CD4-positive, alpha-beta memory T cell (primary cell): ENCODE measurements at regions of chr22 and their contacts with region 1.

Region 1: GRCh38 chr22:25048659-25049647 is 96.4 kb downstream of the KIAA1671 start:
- DNase-seq: peak; percentile 49 to 68 (median 65)
- H3K4me3 ChIP-seq: no peak overlapping the region
- H3K4me3 Mint-ChIP-seq: no peak overlapping the region
- H3K27ac ChIP-seq: no peak overlapping the region
- H3K27ac Mint-ChIP-seq: peak overlapping the region in 1 of 7 donors; percentile 52
- H3K4me1 ChIP-seq: no peaks in the 10 kb centered on the region
- H3K4me1 Mint-ChIP-seq: no peaks in the 10 kb centered on the region
- H3K27me3 ChIP-seq: no peaks in the 10 kb centered on the region
- H3K27me3 Mint-ChIP-seq: peaks cover 2 to 3% of the 10 kb centered on the region in 2 donors

Region 2: GRCh38 chr22:24938741-24939341 is 110.1 kb before region 1 on chr22:
- CTCF ChIA-PET with region 1: interaction called, 63 read pairs
- POLR2A ChIA-PET with region 1: no interaction called
- intact Hi-C with region 1: loop called (anchors 1 kb)
- DNase-seq: peak in 4 of 5 donors; percentile 38 to 47 (median 42)
- H3K4me3 ChIP-seq: no peak overlapping the region
- H3K4me3 Mint-ChIP-seq: no peak overlapping the region
- H3K27ac ChIP-seq: no peak overlapping the region
- H3K27ac Mint-ChIP-seq: no peak overlapping the region
- H3K4me1 ChIP-seq: no peaks in the 10 kb centered on the region
- H3K4me1 Mint-ChIP-seq: peaks cover 0 to 2% (median 0%) of the 10 kb centered on the region in 4 donors
- H3K27me3 ChIP-seq: no peaks in the 10 kb centered on the region
- H3K27me3 Mint-ChIP-seq: peaks cover 0 to 5% of the 10 kb centered on the region in 2 donors

Region 3: DNA sequence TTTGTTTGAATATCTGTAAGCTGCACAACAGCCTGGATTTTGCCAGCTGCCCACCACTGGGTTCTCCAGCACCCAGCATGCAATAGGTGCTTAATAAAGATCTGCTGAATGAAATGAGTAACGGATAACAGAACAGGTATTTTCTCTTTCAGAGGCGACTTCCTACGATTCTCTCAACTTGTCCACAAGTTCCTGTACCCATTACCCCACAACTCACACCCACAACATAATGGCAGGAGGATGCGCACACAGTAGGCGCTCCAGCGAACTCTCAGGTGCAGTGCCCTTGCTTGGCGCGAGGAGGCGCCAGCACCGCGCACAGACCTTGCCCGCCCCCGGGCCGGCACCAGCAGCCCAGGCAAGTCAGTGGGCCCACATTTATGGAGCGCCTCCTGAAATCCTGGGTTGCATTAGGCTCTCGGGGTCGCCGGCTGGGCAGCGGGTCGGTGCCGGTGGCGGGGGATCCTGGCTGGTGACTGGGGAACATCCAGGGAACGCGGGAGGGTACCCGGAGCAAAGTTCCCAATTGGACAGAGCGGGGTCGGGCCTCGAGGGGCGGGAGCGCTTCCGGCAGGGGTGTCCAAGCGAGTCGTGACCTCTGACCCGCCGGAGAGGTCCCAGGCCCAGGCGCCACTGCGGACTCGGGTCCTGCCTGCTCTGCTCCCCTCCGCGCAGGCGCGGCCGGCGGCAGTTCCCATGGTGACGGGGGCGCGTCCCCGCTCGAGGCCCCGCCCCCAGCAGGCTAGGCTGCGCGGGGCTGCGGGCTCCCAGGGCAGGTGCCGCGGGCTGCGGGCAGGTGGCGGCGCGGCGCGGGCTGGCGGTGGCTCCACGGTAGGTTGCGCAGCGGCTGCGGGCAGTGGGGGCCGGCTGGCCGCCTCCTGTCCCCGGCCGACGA is 96.8 kb before region 1 on chr22 and contains the start of gene KIAA1671:
- CTCF ChIA-PET with region 1: interaction called, 46 read pairs
- POLR2A ChIA-PET with region 1: no interaction called
- intact Hi-C with region 1: loop called (anchors 1 kb)
- DNase-seq: peak; percentile 80 to 89 (median 87)
- H3K4me3 ChIP-seq: peak within 1 kb of the TSS in 1 of 2 donors; percentile 63
- H3K4me3 Mint-ChIP-seq: peak within 1 kb of the TSS; percentile 74 to 87 (median 80)
- H3K27ac ChIP-seq: no peak within 1 kb of the TSS
- H3K27ac Mint-ChIP-seq: peak within 1 kb of the TSS in 5 of 7 donors; percentile 22 to 66 (median 53)
- H3K4me1 ChIP-seq: peaks cover 14% of the 10 kb centered on the region
- H3K4me1 Mint-ChIP-seq: peaks cover 6 to 34% (median 14%) of the 10 kb centered on the region in 4 donors
- H3K27me3 ChIP-seq: peaks cover 10% of the 10 kb centered on the region
- H3K27me3 Mint-ChIP-seq: peaks cover 35 to 49% of the 10 kb centered on the region in 2 donors
- total RNA-seq, gene KIAA1671: 9.6 to 10.2 TPM